ENCODE measurements at regions of chr18 and their contacts with region 1.

Region 1: DNA sequence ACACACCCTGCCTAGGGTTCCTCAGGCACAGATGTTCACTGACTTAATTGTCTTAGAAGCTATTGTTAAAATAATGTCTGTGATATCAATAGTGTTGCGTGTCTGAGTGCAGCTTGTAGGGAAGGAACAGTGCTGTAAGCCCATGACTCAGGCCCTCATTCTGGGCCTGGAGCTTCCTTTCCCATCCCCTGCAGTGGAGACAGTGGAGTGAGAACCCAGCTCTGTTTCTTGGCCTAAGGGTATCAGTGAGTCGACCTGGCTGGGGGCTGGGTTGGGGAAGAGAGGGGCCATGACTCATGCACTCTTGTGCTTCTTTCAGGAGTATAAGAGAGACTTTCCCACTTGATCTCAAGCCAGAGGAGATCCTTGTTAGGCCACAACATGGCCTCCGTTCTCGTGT is 106.8 kb downstream of the HRH4 start:
- DNase-seq: no peak
- ATAC-seq: no peak
- H3K4me3 ChIP-seq: no peak overlapping the region
- H3K4me3 Mint-ChIP-seq: no peak overlapping the region
- H3K27ac ChIP-seq: no peak overlapping the region
- H3K27ac Mint-ChIP-seq: no peak overlapping the region
- H3K4me1 ChIP-seq: no peaks in the 10 kb centered on the region
- H3K4me1 Mint-ChIP-seq: no peaks in the 10 kb centered on the region
- H3K27me3 ChIP-seq: no peaks in the 10 kb centered on the region
- H3K27me3 Mint-ChIP-seq: peaks cover 5% of the 10 kb centered on the region
- CTCF ChIP-seq: no peak

Region 2: DNA sequence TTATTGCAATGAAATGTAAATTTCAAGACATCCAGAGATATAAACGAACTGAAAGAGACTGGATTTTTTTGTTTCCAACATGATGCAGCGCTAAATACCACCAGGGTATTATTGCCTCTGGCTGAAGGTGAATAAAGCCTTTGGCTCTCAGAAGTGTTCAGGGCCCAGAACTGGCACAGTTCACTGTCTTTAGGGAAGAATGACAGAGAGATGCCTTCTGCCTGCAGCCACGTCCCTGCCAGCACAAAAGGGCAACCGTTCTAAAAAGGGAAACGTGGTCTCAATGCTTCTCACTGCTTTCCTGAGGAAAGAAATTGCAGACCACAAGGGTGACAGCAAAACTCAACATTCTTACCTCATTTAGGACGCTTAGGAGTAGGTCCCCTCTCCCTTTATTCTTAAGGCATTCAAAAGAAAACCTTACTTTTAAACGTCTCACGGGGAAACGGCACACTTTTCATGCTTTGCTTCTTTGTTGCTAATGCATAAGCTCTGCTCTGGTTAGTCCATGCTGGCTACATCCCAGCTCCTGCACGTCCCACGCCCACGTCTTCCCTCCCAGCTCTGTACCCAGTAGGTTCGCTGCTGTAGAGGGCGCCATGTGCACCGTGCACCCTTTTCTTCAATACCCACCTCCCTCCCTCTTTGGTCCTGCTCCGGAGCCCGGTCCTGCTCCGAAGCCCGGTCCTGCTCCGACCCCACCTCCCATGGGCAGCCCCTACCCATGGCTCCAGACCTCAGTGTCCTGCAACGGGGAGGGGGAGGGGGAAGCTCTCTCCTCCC is 64.2 kb after region 1 on chr18:
- CTCF ChIA-PET with region 1: no interaction called
- POLR2A ChIA-PET with region 1: no interaction called
- intact Hi-C with region 1: loop called in 1 of 2 experiments (anchors 2 kb)
- DNase-seq: no peak
- ATAC-seq: no peak
- H3K4me3 ChIP-seq: no peak overlapping the region
- H3K4me3 Mint-ChIP-seq: no peak overlapping the region
- H3K27ac ChIP-seq: no peak overlapping the region
- H3K27ac Mint-ChIP-seq: no peak overlapping the region
- H3K4me1 ChIP-seq: no peaks in the 10 kb centered on the region
- H3K4me1 Mint-ChIP-seq: no peaks in the 10 kb centered on the region
- H3K27me3 ChIP-seq: no peaks in the 10 kb centered on the region
- H3K27me3 Mint-ChIP-seq: peaks cover 8% of the 10 kb centered on the region
- CTCF ChIP-seq: no peak

Region 3: DNA sequence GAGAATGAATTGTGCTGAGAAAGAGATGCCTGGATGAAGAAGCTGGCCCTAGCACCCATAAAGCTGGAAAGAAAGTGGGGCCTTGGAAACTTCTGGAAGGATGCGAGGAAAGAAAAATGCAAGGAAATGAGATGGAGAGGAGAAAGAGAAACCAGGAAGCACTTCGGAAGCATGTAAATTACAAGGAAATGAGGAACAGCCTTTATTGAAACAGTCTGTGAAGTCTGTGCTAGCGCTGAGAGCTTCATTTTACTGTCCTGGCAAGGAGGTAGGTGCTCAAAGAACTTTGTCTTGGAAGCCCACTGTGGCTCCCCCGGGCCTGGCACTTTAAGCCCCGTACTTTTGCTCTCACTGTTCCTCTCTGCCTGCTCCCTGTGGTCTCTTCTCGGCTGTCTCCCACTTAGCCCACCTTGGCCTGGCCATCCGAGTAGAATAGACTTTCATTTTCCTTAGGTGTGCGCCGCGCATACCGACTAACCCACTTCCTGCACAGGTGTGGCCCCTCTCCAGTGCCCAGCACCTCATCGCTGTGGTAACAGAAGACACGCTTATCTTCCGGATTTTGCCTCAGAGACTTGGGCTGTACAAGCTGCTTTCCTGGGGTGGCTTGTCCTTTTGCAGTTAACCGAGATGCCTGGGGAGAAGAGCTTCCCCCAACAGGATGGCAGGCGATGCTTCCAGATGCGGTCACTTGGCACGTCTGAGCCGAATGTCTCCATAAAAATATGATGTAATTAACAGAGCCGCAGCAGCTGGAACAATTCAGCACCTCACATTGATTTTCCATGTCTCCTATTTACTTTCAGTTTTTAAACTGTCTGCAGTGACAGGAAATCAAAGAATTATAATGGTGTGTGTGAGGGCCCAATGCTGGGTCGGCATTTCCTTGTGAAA is 92.9 kb after region 1 on chr18:
- CTCF ChIA-PET with region 1: no interaction called
- POLR2A ChIA-PET with region 1: no interaction called
- intact Hi-C with region 1: no loop called
- DNase-seq: peak in 8 of 9 experiments; percentile 7 to 63 (median 32)
- ATAC-seq: peak; percentile 69
- H3K4me3 ChIP-seq: peak overlapping the region; percentile 16 to 37
- H3K4me3 Mint-ChIP-seq: peak overlapping the region; percentile 85
- H3K27ac ChIP-seq: peak overlapping the region; percentile 15 to 40
- H3K27ac Mint-ChIP-seq: peak overlapping the region; percentile 90
- H3K4me1 ChIP-seq: peaks cover 9% of the 10 kb centered on the region
- H3K4me1 Mint-ChIP-seq: peaks cover 18% of the 10 kb centered on the region
- H3K27me3 ChIP-seq: no peaks in the 10 kb centered on the region
- H3K27me3 Mint-ChIP-seq: peaks cover 3% of the 10 kb centered on the region
- CTCF ChIP-seq: no peak